CD4-positive, alpha-beta memory T cell (primary cell): ENCODE measurements at regions of chr17 and their contacts with region 1.

Region 1: GRCh38 chr17:76474894-76475293 is 7.5 kb downstream of the AANAT start:
- DNase-seq: no peak
- H3K4me3 ChIP-seq: no peak overlapping the region
- H3K4me3 Mint-ChIP-seq: no peak overlapping the region
- H3K27ac ChIP-seq: no peak overlapping the region
- H3K27ac Mint-ChIP-seq: peak overlapping the region in 1 of 7 donors; percentile 47
- H3K4me1 ChIP-seq: no peaks in the 10 kb centered on the region
- H3K4me1 Mint-ChIP-seq: peaks cover 0 to 1% (median 0%) of the 10 kb centered on the region in 4 donors
- H3K27me3 ChIP-seq: no peaks in the 10 kb centered on the region
- H3K27me3 Mint-ChIP-seq: no peaks in the 10 kb centered on the region

Region 2: DNA sequence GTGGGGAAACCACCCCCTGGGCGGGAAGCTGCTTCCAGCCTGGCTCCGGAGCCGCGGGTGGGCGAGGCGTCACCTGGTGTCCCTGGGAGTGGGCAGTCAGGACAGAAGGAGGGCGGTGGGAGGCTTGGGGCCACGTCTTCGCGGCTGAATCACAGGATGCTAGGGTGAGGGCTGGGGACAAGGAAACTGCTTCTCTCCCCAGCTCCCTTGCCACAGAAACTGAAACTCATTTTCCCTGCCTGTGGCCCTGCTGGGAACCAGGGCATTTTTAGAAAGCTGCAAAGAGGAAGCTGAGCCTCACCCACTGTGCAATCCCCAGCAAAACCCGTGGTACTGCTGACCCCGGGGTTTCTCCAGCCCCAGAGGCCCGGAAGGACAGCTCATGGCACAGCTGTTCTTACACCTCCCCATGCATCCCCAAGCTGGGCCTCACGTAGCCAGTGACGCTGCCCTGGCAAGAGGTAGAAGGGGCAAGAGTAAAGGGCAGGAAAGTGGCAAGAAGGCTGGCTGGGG is 18.2 kb after region 1 on chr17:
- CTCF ChIA-PET with region 1: interaction called, 161 read pairs
- POLR2A ChIA-PET with region 1: interaction called, 10 read pairs
- intact Hi-C with region 1: no loop called
- DNase-seq: peak; percentile 15 to 53 (median 37)
- H3K4me3 ChIP-seq: peak overlapping the region; percentile 34 to 46
- H3K4me3 Mint-ChIP-seq: peak overlapping the region; percentile 70 to 87 (median 84)
- H3K27ac ChIP-seq: peak overlapping the region; percentile 64
- H3K27ac Mint-ChIP-seq: peak overlapping the region; percentile 74 to 97 (median 94)
- H3K4me1 ChIP-seq: peaks cover 46% of the 10 kb centered on the region
- H3K4me1 Mint-ChIP-seq: peaks cover 17 to 64% (median 42%) of the 10 kb centered on the region in 4 donors
- H3K27me3 ChIP-seq: no peaks in the 10 kb centered on the region
- H3K27me3 Mint-ChIP-seq: no peaks in the 10 kb centered on the region

Region 3: DNA sequence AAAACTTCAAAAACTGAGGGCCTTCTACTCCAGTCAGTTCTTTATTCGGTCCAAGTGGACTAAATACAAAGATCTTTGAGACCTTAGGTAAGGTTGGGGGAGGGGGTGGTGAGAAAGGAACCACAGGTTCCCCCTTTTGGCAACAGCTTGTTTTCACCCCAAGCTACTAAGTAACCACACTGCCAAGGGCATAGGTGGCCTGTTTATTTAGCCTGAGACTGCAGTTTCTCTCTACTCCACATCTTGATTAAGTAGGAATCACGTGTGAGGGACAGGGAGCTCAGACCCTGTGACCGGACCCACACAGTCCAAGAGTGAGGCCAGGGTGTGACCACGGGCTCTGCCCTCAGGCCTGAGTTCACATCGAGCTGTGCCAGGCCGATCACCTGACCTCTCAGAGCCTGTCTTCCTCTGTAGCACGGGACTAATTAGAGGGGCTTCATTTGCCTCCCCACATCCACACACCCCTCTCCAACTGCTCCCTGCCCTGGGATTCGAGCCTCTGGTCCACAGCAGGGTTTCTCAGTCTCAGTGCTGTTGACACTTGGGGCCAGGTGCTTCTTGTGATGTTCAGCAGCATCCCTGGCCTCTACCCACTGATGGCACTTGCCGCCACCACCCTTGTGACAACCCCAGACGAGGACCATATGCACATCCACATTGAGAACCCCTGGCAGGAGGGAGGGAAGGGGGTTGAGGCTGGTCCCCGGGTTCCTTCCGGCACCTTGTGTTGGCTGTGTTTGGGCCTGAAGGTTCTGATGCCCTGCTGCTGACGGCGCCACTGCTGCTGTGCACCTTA is 92.9 kb after region 1 on chr17:
- CTCF ChIA-PET with region 1: no interaction called
- POLR2A ChIA-PET with region 1: no interaction called
- intact Hi-C with region 1: no loop called
- DNase-seq: no peak
- H3K4me3 ChIP-seq: no peak overlapping the region
- H3K4me3 Mint-ChIP-seq: peak overlapping the region in 1 of 8 donors; percentile 23
- H3K27ac ChIP-seq: no peak overlapping the region
- H3K27ac Mint-ChIP-seq: peak overlapping the region; percentile 24 to 88 (median 60)
- H3K4me1 ChIP-seq: peaks cover 3% of the 10 kb centered on the region
- H3K4me1 Mint-ChIP-seq: peaks cover 24 to 47% (median 32%) of the 10 kb centered on the region in 4 donors
- H3K27me3 ChIP-seq: no peaks in the 10 kb centered on the region
- H3K27me3 Mint-ChIP-seq: no peaks in the 10 kb centered on the region

Region 4: DNA sequence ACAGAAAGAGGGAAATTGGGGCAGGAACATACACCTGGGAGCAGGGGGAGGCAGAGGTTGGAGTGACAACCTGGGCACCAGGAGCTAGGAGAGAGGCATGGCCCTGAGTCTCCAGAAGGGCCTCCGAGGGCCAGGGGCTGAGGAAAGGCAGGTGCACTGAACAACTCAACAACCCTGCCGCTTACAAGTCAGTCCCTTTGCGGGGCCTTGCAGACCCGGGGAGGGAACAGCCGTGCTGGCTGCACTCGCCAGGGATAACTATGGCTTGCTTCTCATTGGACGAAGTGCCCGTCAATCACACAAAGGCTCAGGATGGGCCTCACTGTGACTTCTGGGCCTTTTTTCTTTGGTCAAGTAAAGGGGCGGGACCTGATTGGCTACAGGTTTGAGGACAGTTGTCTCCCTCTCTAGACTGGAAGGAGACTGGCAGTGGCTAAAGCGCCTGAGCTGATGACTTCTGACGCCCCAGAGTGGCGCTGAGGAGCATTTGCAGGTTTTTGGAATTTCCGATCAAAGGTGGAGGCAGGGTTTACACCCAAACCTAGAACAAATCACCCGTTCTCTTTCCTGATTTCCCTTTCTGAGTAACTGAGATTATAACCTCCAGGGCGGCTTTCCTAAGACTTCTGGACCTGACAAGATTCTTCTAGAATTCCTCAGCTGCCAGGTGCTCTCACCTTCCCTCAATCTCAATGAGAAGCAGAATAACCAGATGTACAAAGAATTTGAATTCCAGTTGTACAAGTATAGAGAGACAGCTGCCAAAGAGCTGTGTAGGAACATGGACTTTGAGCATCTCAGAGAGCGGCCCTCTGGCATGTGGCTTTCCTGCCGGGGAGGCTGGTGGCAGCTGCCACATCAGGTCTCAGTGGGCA is 138.3 kb after region 1 on chr17:
- CTCF ChIA-PET with region 1: no interaction called
- POLR2A ChIA-PET with region 1: no interaction called
- intact Hi-C with region 1: no loop called
- DNase-seq: no peak
- H3K4me3 ChIP-seq: no peak overlapping the region
- H3K4me3 Mint-ChIP-seq: no peak overlapping the region
- H3K27ac ChIP-seq: no peak overlapping the region
- H3K27ac Mint-ChIP-seq: peak overlapping the region in 2 of 7 donors; percentile 22
- H3K4me1 ChIP-seq: no peaks in the 10 kb centered on the region
- H3K4me1 Mint-ChIP-seq: peaks cover 0 to 7% (median 2%) of the 10 kb centered on the region in 4 donors
- H3K27me3 ChIP-seq: no peaks in the 10 kb centered on the region
- H3K27me3 Mint-ChIP-seq: peaks cover 3 to 4% of the 10 kb centered on the region in 2 donors